Transverse colon (tissue), 4 donors: ENCODE measurements at regions of chr3 and their contacts with region 1.

Region 1: DNA sequence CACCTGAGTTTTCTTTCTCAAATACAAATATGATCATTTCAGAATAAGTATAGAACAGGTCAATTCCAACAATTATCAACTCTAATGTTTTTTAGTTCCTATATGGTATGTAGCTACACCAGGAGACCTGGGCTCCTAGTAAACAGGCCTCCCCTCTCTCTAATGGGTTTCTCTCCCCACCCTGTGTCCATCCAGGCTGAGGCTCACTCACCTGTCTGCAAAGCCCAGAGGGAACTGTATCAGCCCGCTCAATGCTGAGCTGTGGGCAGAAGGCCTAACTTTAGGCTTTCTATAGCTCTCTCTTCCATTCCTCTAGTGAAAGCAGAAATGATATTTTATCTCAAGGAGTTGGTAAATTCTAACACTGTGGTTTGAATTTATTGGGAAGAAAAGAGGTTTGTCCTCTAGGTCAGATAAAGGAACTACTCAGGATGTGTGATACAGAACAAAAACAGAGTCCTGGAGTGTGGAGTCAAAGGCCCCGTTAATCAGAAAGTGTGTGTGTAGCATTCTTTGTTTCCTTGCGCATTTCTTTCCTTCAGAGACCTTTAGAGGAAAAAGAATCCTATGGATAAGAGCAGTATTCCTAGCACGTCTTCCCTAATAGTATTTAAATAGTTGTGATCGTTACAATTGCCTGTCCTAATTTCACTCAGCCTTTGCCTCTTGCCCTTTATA is 408.9 kb downstream of the PYDC2 start:
- DNase-seq: no peak
- H3K4me3 ChIP-seq: no peak overlapping the region
- H3K27ac ChIP-seq: no peak overlapping the region
- H3K4me1 ChIP-seq: no peaks in the 10 kb centered on the region
- H3K27me3 ChIP-seq: no peaks in the 10 kb centered on the region
- CTCF ChIP-seq: no peak
- EP300 ChIP-seq: no peak
- POLR2A ChIP-seq: no peak

Region 2: DNA sequence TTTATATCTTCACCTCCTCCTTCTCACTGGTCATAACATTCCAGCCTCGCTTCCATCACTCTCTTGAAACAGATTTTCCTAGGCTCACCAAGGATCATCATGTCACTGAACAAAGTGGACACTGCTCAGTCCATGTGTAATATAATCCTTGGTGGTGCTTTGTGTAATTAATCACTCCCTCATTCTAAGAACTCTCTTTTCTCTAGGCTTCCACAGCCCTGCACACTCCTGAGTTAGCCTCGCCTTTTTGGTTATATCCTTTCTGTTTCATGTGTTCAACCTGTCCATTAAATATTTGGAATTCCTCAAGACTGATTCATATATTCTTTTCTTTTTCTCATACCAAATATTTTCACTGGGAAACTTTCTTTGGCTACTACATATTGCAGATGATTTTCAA is 31.9 kb after region 1 on chr3:
- in situ Hi-C with region 1: no loop called
- intact Hi-C with region 1: loop called (anchors 1 kb)
- DNase-seq: no peak
- H3K4me3 ChIP-seq: no peak overlapping the region
- H3K27ac ChIP-seq: no peak overlapping the region
- H3K4me1 ChIP-seq: no peaks in the 10 kb centered on the region
- H3K27me3 ChIP-seq: no peaks in the 10 kb centered on the region
- CTCF ChIP-seq: no peak
- EP300 ChIP-seq: no peak
- POLR2A ChIP-seq: no peak